Cardiac septum (tissue), 1 donor: ENCODE measurements at regions of chr3 and their contacts with region 1.

Region 1: GRCh38 chr3:96863129-96863740 is 48.8 kb downstream of the EPHA6 start:
- DNase-seq: no peak

Region 2: GRCh38 chr3:97037277-97037913 is 174.2 kb after region 1 on chr3:
- intact Hi-C with region 1: no loop called
- DNase-seq: no peak

Region 3: DNA sequence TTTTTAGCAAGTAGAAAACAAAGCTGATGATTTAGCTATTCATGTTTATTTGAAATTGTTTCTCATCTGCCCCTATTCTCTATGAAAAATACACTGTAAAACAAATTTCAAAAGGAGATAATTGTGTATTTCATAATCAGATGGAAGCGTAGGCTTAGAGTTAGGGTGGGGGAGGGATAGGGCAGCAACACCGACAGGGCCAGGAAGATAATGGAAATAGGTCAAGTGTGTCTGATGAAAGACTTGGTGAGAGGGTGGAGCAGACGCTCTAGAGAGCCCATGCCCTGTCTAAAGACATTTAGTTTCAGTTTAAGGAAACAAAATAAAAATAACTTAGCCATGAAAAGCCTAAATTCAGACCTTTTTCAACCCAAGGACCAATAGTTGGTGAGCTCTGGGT is 849.7 kb after region 1 on chr3:
- intact Hi-C with region 1: loop called (anchors 5 kb)
- DNase-seq: no peak

Region 4: GRCh38 chr3:97720438-97720837 is 857.2 kb after region 1 on chr3:
- intact Hi-C with region 1: loop called (anchors 5 kb)
- DNase-seq: no peak